GM10248 (cell line): ENCODE measurements at regions of chr10 and their contacts with region 1.

Region 1: GRCh38 chr10:127715782-127716378 is 21.1 kb upstream of the FOXI2 start:
- DNase-seq: peak; percentile 29
- CTCF ChIP-seq: peak; percentile 51

Region 2: GRCh38 chr10:127853868-127854768 is 138.2 kb after region 1 on chr10:
- CTCF ChIA-PET with region 1: interaction called, 13 read pairs
- POLR2A ChIA-PET with region 1: no interaction called
- DNase-seq: peak; percentile 77
- CTCF ChIP-seq: peak; percentile 71